ENCODE measurements at regions of chr22 and their contacts with region 1.

Region 1: GRCh38 chr22:36301384-36301828 is 48.5 kb downstream of the APOL1 start:
- DNase-seq: peak; percentile 87
- ATAC-seq: peak; percentile 93
- H3K4me3 Mint-ChIP-seq: no peak overlapping the region
- H3K27ac Mint-ChIP-seq: peak overlapping the region; percentile 54
- H3K4me1 Mint-ChIP-seq: peaks cover 6% of the 10 kb centered on the region
- H3K27me3 Mint-ChIP-seq: no peaks in the 10 kb centered on the region
- CTCF ChIP-seq: peak; percentile 94

Region 2: GRCh38 chr22:36239401-36240171 is 61.8 kb before region 1 on chr22 and contains the start of gene APOL2:
- CTCF ChIA-PET with region 1: interaction called, 10 read pairs
- POLR2A ChIA-PET with region 1: no interaction called
- intact Hi-C with region 1: no loop called
- DNase-seq: peak; percentile 93
- ATAC-seq: peak; percentile 95
- H3K4me3 Mint-ChIP-seq: peak within 1 kb of the TSS; percentile 98
- H3K27ac Mint-ChIP-seq: peak within 1 kb of the TSS; percentile 97
- H3K4me1 Mint-ChIP-seq: peaks cover 49% of the 10 kb centered on the region
- H3K27me3 Mint-ChIP-seq: no peaks in the 10 kb centered on the region
- CTCF ChIP-seq: peak; percentile 39
- total RNA-seq, gene APOL2: 45.4 to 49.7 TPM

Region 3: GRCh38 chr22:36286471-36287224 is 14.8 kb before region 1 on chr22:
- CTCF ChIA-PET with region 1: interaction called, 44 read pairs
- POLR2A ChIA-PET with region 1: interaction called, 5 read pairs
- intact Hi-C with region 1: no loop called
- DNase-seq: peak; percentile 75
- ATAC-seq: peak; percentile 91
- H3K4me3 Mint-ChIP-seq: no peak overlapping the region
- H3K27ac Mint-ChIP-seq: peak overlapping the region; percentile 44
- H3K4me1 Mint-ChIP-seq: peaks cover 18% of the 10 kb centered on the region
- H3K27me3 Mint-ChIP-seq: no peaks in the 10 kb centered on the region
- CTCF ChIP-seq: peak; percentile 72

Region 4: GRCh38 chr22:36317658-36318271 is 16.4 kb after region 1 on chr22:
- CTCF ChIA-PET with region 1: interaction called, 55 read pairs
- POLR2A ChIA-PET with region 1: interaction called, 12 read pairs
- intact Hi-C with region 1: no loop called
- DNase-seq: no peak
- ATAC-seq: no peak
- H3K4me3 Mint-ChIP-seq: no peak overlapping the region
- H3K27ac Mint-ChIP-seq: peak overlapping the region; percentile 33
- H3K4me1 Mint-ChIP-seq: peaks cover 4% of the 10 kb centered on the region
- H3K27me3 Mint-ChIP-seq: no peaks in the 10 kb centered on the region
- CTCF ChIP-seq: no peak

Region 5: GRCh38 chr22:36339171-36340065 is 38.0 kb after region 1 on chr22:
- CTCF ChIA-PET with region 1: interaction called, 16 read pairs
- POLR2A ChIA-PET with region 1: no interaction called
- intact Hi-C with region 1: no loop called
- DNase-seq: peak; percentile 82
- ATAC-seq: peak; percentile 25
- H3K4me3 Mint-ChIP-seq: no peak overlapping the region
- H3K27ac Mint-ChIP-seq: peak overlapping the region; percentile 88
- H3K4me1 Mint-ChIP-seq: peaks cover 93% of the 10 kb centered on the region
- H3K27me3 Mint-ChIP-seq: no peaks in the 10 kb centered on the region
- CTCF ChIP-seq: no peak

Region 6: DNA sequence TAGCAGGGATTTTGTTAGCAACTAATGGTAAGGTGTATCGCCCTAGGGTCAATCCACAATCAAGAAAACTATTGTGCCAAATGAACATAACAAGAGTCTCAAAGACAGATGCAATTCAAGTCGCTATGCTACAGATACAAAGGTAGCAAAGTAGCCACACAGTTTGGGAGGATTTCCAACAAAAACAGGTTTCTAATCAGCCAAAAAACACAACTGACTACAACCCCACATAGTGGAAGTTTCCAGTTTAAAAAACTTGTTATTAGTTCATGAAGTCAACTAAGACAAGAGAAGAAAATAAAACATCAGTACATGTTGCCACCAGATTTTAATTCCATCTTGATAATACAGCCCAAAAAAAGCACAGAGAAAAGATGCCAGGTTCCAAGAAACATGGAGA is 48.3 kb after region 1 on chr22:
- CTCF ChIA-PET with region 1: no interaction called
- POLR2A ChIA-PET with region 1: no interaction called
- intact Hi-C with region 1: no loop called
- DNase-seq: no peak
- ATAC-seq: no peak
- H3K4me3 Mint-ChIP-seq: peak overlapping the region; percentile 9
- H3K27ac Mint-ChIP-seq: peak overlapping the region; percentile 91
- H3K4me1 Mint-ChIP-seq: peaks cover 87% of the 10 kb centered on the region
- H3K27me3 Mint-ChIP-seq: no peaks in the 10 kb centered on the region
- CTCF ChIP-seq: no peak

Region 7: DNA sequence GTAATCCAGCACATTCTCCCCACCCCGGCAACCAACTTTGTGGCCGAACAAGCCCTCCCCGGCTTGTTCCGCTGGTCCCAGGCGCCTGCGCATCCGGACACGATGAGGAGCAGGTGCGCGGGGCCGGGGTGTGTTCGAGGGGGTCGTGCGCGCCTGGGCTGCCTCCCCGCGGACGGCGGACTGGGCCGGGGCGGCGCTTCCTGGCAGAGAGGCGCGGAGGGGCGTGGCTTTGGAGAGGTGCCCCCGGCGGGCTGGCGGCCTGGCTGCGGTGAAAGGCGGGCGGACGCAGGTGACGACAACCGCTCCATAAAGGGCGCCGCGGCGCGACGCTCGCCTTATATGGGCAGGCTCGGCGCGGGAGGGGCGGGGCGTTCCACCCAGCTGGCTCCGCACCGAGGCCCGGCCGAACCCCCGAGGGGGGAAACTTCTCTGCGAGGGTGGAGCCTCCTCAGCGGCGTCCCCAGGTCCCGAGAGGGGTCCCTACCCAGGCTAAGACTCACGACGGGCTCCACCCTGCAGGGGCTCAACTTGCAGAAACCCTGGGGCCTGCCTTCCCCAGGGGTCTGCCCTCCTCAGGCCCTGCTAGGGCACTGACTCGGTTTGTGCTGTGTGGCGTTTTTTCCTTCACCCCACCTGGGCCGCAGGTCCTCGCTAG is 153.6 kb after region 1 on chr22:
- CTCF ChIA-PET with region 1: interaction called, 13 read pairs
- POLR2A ChIA-PET with region 1: no interaction called
- intact Hi-C with region 1: no loop called
- DNase-seq: peak; percentile 98
- ATAC-seq: peak; percentile 75
- H3K4me3 Mint-ChIP-seq: peak overlapping the region; percentile 73
- H3K27ac Mint-ChIP-seq: peak overlapping the region; percentile 83
- H3K4me1 Mint-ChIP-seq: peaks cover 38% of the 10 kb centered on the region
- H3K27me3 Mint-ChIP-seq: no peaks in the 10 kb centered on the region
- CTCF ChIP-seq: no peak

Region 8: GRCh38 chr22:36486619-36487384 is 185.4 kb after region 1 on chr22:
- CTCF ChIA-PET with region 1: interaction called, 56 read pairs
- POLR2A ChIA-PET with region 1: interaction called, 4 read pairs
- intact Hi-C with region 1: no loop called
- DNase-seq: peak; percentile 80
- ATAC-seq: no peak
- H3K4me3 Mint-ChIP-seq: no peak overlapping the region
- H3K27ac Mint-ChIP-seq: no peak overlapping the region
- H3K4me1 Mint-ChIP-seq: peaks cover 8% of the 10 kb centered on the region
- H3K27me3 Mint-ChIP-seq: no peaks in the 10 kb centered on the region
- CTCF ChIP-seq: peak; percentile 69

Measured in activated CD8-positive, alpha-beta T cell treated with anti-CD3 and anti-CD28 coated beads for 36 hours (primary cell).